Activated CD4-positive, alpha-beta memory T cell treated with anti-CD3 and anti-CD28 coated beads for 36 hours (primary cell): ENCODE measurements at regions of chr3 and their contacts with region 1.

Region 1: GRCh38 chr3:129793942-129794310 is 99.6 kb downstream of the TMCC1 start:
- DNase-seq: no peak
- H3K4me3 Mint-ChIP-seq: no peak overlapping the region
- H3K27ac Mint-ChIP-seq: no peak overlapping the region
- H3K4me1 Mint-ChIP-seq: peaks cover 17% of the 10 kb centered on the region
- H3K27me3 Mint-ChIP-seq: no peaks in the 10 kb centered on the region

Region 2: DNA sequence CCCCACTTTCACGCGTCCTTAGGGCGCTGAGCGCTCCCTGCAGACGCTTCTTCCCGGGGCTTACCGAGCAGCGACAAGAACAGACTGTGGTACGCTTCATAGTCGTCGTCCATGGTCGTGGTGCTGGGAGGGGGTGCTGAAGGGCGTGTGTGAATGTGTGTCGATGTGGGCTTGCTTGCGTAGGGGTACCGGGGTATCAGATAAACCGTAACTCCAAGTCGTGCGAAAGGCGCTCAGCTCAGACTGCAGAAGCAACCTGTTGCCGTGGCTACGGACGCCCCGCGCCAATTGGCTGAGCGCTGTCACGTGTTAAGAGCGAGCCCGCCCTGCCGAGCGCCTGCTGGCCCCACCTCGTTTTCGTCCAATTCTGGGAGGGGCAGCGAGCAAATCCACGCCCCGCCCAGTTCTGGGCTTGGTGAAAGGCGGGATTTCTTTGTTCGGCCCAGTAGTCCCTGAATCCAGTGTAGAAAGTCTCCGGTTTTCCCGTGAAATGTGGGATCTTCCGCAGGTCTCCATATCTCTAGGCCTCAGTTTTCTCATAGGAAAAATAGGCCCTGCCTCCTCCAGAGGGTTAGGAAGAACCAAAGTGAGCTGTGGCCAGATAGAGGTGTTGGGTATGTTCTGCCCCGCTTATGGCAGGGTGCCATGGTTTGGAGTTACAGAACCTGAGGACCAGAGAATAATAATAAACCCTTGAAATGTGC is 365.4 kb before region 1 on chr3 and contains the start of gene EFCAB12:
- CTCF ChIA-PET with region 1: no interaction called
- POLR2A ChIA-PET with region 1: no interaction called
- intact Hi-C with region 1: no loop called
- DNase-seq: peak; percentile 94
- H3K4me3 Mint-ChIP-seq: peak within 1 kb of the TSS; percentile 59
- H3K27ac Mint-ChIP-seq: peak within 1 kb of the TSS; percentile 72
- H3K4me1 Mint-ChIP-seq: peaks cover 38% of the 10 kb centered on the region
- H3K27me3 Mint-ChIP-seq: no peaks in the 10 kb centered on the region
- total RNA-seq, gene EFCAB12: 0.31 to 0.45 TPM

Region 3: GRCh38 chr3:129749692-129750091 is 44.2 kb before region 1 on chr3:
- CTCF ChIA-PET with region 1: no interaction called
- POLR2A ChIA-PET with region 1: no interaction called
- intact Hi-C with region 1: loop called (anchors 1 kb)
- DNase-seq: no peak
- H3K4me3 Mint-ChIP-seq: no peak overlapping the region
- H3K27ac Mint-ChIP-seq: no peak overlapping the region
- H3K4me1 Mint-ChIP-seq: peaks cover 6% of the 10 kb centered on the region
- H3K27me3 Mint-ChIP-seq: no peaks in the 10 kb centered on the region